HCT116 (cell line): ENCODE measurements at regions of chr11 and their contacts with region 1.

Region 1: GRCh38 chr11:72793425-72794367 is at the start of gene STARD10:
- DNase-seq: peak; percentile 87
- ATAC-seq: peak; percentile 94
- H3K4me3 ChIP-seq: peak within 1 kb of the TSS; percentile 53 to 70
- H3K27ac ChIP-seq: peak within 1 kb of the TSS; percentile 57
- H3K4me1 ChIP-seq: peaks cover 19 to 57% of the 10 kb centered on the region in 2 experiments
- H3K27me3 ChIP-seq: no peaks in the 10 kb centered on the region
- CTCF ChIP-seq: peak; percentile 91 to 96 (median 94)
- POLR2A ChIP-seq: peak; percentile 20
- RAD21 ChIP-seq: peak; percentile 78
- total RNA-seq, gene STARD10: 58.4 TPM

Region 2: GRCh38 chr11:72722050-72722748 is 71.5 kb before region 1 on chr11:
- CTCF ChIA-PET with region 1: interaction called, 26 read pairs
- POLR2A ChIA-PET with region 1: interaction called, 4 read pairs
- RAD21 ChIA-PET with region 1: interaction called in 1 of 2 experiments, 6 read pairs
- intact Hi-C with region 1: loop called (anchors 1 kb)
- DNase-seq: peak; percentile 81
- ATAC-seq: peak; percentile 99
- H3K4me3 ChIP-seq: peak overlapping the region; percentile 57 to 64
- H3K27ac ChIP-seq: peak overlapping the region; percentile 71
- H3K4me1 ChIP-seq: peaks cover 8 to 21% of the 10 kb centered on the region in 2 experiments
- H3K27me3 ChIP-seq: no peaks in the 10 kb centered on the region
- CTCF ChIP-seq: no peak
- POLR2A ChIP-seq: peak; percentile 25
- RAD21 ChIP-seq: no peak

Region 3: GRCh38 chr11:72781313-72782050 is 12.2 kb before region 1 on chr11:
- CTCF ChIA-PET with region 1: interaction called, 21 read pairs
- POLR2A ChIA-PET with region 1: interaction called, 7 read pairs
- RAD21 ChIA-PET with region 1: no interaction called
- intact Hi-C with region 1: no loop called
- DNase-seq: no peak
- ATAC-seq: peak; percentile 74
- H3K4me3 ChIP-seq: peak overlapping the region; percentile 59 to 79
- H3K27ac ChIP-seq: peak overlapping the region; percentile 46; the same call in 1 of the 2 replicates
- H3K4me1 ChIP-seq: peaks cover 12 to 49% of the 10 kb centered on the region in 2 experiments
- H3K27me3 ChIP-seq: no peaks in the 10 kb centered on the region
- CTCF ChIP-seq: no peak
- POLR2A ChIP-seq: no peak
- RAD21 ChIP-seq: no peak

Region 4: DNA sequence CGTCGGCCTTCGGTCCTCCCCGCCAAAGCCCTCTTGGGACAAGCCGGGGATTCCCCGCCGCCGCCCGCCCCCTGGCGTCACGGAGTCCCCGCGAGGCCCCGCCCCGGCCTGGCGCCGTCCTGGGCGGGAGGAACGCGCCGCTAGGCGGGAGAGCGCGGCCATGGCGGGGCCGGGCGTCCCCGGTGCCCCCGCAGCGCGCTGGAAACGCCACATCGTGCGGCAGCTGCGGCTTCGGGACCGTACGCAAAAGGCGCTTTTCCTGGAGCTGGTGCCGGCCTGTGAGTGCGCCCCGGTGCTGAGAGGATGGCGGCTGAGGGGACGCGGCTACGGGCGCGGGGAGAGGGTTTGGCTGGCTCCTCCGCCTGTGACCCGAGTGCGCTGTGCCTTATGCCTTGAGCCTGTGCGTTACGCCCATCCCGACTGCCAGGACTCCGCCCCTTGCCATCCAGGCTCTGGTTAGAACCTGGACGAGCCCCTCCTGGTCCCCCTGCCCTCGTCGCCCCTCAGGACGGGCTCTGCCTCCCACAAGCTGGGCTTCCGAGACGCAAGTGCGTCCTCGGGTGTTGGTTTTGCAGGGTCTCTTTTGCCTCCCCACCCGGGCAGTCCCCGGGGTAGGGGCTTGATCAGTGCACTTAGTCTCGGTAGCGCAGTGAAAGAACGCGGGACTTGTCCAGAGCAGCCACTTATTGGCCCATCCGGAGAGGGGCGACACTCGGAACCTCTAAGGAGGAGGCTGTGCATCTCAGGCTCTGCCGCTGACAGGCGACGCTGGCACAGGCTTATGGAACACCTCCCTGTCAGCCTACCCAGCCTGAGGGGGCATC is 20.8 kb after region 1 on chr11 and contains the start of gene ATG16L2:
- CTCF ChIA-PET with region 1: interaction called, 5 read pairs
- POLR2A ChIA-PET with region 1: interaction called, 10 read pairs
- RAD21 ChIA-PET with region 1: interaction called in 1 of 2 experiments, 3 read pairs
- intact Hi-C with region 1: no loop called
- DNase-seq: peak; percentile 71
- ATAC-seq: peak; percentile 80
- H3K4me3 ChIP-seq: peak within 1 kb of the TSS; percentile 85 to 95
- H3K27ac ChIP-seq: peak within 1 kb of the TSS; percentile 97
- H3K4me1 ChIP-seq: peaks cover 9 to 38% of the 10 kb centered on the region in 2 experiments; a peak in 3 of 4 replicates
- H3K27me3 ChIP-seq: no peaks in the 10 kb centered on the region
- CTCF ChIP-seq: no peak
- POLR2A ChIP-seq: no peak
- RAD21 ChIP-seq: no peak
- total RNA-seq, gene ATG16L2: 15.2 TPM

Region 5: DNA sequence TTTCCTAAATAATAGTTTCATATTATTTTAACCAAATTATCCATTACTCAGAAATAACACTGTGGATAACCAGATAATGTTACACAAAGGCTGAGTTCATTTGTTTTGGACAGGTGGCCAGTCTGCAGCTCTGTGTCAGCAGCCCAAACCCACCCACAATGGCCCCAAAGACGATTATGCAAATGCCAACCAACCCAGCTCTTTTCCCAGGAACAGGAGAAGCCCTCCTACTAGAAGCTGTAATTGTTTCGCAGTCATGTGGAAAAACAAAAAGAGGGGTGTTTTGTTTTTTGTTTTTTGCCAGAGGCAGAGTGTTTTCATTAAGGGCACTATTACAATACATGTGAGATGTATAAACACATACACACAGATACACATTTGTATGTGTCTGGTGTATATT is 246.3 kb after region 1 on chr11:
- CTCF ChIA-PET with region 1: no interaction called
- POLR2A ChIA-PET with region 1: no interaction called
- RAD21 ChIA-PET with region 1: no interaction called
- intact Hi-C with region 1: no loop called
- DNase-seq: no peak
- ATAC-seq: no peak
- H3K4me3 ChIP-seq: no peak overlapping the region
- H3K27ac ChIP-seq: no peak overlapping the region
- H3K4me1 ChIP-seq: no peaks in the 10 kb centered on the region
- H3K27me3 ChIP-seq: no peaks in the 10 kb centered on the region
- CTCF ChIP-seq: no peak
- POLR2A ChIP-seq: no peak
- RAD21 ChIP-seq: no peak